Activated CD4-positive, alpha-beta T cell treated with anti-CD3 and anti-CD28 coated beads, Interleukin-2, amount 10 ng/mL, durations not matched to agents 24 days and 14 days (primary cell): ENCODE measurements at regions of chr12 and their contacts with region 1.

Region 1: GRCh38 chr12:47779301-47779942 is 6.4 kb downstream of the SLC48A1 start:
- DNase-seq: peak; percentile 97
- H3K4me3 Mint-ChIP-seq: no peak overlapping the region
- H3K27ac Mint-ChIP-seq: peak overlapping the region; percentile 64
- H3K4me1 Mint-ChIP-seq: peaks cover 43% of the 10 kb centered on the region
- H3K27me3 Mint-ChIP-seq: no peaks in the 10 kb centered on the region

Region 2: DNA sequence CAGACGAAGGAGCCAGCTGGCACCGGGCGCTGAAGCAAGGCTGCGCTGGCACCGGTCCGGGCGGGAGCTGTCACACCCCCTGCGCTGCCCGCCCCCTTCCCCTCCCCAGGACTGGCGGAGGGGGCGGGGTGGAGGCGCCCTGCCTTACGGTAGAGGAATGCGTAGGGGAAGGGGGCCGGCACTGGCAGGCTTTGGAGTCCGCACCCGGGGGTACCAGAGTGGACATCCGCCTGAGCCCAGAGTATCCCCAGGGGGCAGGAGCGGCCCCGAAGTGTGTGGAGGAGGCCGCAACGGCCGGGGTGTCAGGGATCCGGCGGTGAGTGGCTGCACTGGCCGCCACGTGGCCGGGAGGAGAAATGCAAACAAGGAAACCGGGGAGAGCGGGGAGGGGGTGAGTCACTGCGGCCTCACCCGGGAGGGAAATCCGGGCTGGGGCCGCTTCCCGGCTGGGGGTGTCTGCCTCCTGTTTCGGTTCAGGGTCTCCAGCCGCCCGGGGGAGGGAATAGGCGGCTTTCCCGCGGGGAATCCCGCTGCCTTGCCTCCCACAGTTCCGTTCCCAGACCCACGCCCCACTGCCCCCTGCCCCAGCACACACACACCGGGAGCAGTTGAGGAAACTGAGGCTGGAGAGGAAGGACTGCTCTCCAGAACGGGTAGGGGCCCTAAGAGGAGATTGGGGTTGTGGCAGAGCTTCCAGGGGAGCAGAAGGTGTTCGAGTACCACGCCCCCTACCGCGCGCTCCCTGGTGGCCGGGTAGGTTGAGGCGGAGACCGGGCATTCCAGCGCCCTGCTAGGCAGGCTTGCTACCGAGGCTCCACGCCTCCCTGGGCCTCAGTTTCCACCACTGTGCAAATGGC is 20.4 kb before region 1 on chr12 and contains the start of gene RAPGEF3:
- intact Hi-C with region 1: loop called (anchors 2 kb)
- DNase-seq: peak; percentile 91
- H3K4me3 Mint-ChIP-seq: peak within 1 kb of the TSS; percentile 82
- H3K27ac Mint-ChIP-seq: peak within 1 kb of the TSS; percentile 60
- H3K4me1 Mint-ChIP-seq: peaks cover 59% of the 10 kb centered on the region
- H3K27me3 Mint-ChIP-seq: peaks cover 2% of the 10 kb centered on the region
- total RNA-seq, gene RAPGEF3: 3.6 and 4.5 TPM in 2 replicates

Region 3: DNA sequence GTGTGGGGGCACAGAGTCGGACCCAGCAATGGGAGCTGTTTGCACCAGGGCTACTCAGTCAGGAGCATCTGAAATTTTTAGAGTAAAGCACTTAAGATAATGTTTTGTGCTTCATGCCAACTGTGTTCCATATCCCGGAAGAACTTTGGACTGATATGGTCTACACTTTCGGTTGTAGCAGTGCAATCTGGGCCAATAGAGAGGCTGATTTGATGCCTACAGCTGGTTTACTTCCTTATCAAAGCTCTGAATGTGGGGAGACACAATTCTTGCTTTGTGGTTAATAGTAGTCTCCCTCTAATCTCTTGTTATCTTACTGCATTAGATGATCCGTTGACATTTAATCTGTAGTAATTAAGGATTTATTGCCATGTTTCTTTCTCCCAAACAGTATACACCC is 133.1 kb after region 1 on chr12:
- intact Hi-C with region 1: no loop called
- DNase-seq: no peak
- H3K4me3 Mint-ChIP-seq: no peak overlapping the region
- H3K27ac Mint-ChIP-seq: no peak overlapping the region
- H3K4me1 Mint-ChIP-seq: peaks cover 3% of the 10 kb centered on the region
- H3K27me3 Mint-ChIP-seq: peaks cover 45% of the 10 kb centered on the region